ENCODE measurements at regions of chr9 and their contacts with region 1.

Region 1: DNA sequence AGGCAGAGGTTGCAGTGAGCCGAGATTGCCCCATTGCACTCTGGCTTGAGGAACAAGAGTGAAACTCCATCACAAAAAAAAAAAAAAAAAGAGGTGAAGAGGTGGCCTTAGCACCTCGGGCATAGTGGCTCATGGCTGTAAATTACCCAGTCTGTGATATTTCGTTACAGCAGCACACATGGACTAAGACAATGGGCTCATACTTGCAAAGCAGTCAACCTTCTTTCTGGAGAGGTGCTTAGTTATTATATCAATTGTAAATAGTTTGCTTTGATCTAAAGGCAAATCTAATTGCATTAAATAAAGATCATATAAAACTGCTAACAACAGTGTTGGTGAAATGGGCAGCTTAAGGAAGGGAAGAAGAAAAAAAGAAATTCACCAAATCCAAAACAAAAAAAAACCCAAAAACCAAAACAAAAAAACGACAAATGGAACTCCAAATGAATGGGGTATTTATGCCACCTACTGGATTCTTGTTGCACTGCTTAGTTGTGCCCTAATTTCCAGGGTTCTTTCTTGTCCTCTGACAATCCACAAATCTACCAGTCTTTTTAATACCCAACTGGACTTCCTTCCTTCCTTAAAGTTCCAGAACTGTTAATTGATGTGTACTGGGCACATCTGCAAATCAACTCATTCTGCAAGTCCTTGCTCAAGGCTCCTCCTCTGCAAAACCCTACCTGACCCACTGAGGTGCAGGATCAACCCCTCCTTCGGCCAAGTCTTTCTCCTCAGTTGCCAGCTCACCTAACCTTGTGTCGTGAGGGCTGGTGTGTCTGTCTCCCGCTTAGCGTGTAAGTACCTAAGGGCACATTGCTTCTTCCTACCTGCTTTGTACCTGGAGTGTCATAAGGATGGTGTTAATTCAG is 35.0 kb upstream of the DMRT1 start:
- DNase-seq: peak; percentile 50
- H3K4me3 ChIP-seq: no peak overlapping the region
- H3K27ac ChIP-seq: no peak overlapping the region
- H3K4me1 ChIP-seq: peaks cover 33% of the 10 kb centered on the region
- H3K27me3 ChIP-seq: no peaks in the 10 kb centered on the region
- CTCF ChIP-seq: peak; percentile 56 to 68
- POLR2A ChIP-seq: no peak

Region 2: GRCh38 chr9:469672-470551 is 336.6 kb before region 1 on chr9:
- CTCF ChIA-PET with region 1: no interaction called
- POLR2A ChIA-PET with region 1: no interaction called
- dilution Hi-C with region 1: no loop called
- intact Hi-C with region 1: loop called (anchors 1 kb)
- DNase-seq: peak; percentile 90
- H3K4me3 ChIP-seq: peak overlapping the region; percentile 46 to 82 (median 70)
- H3K27ac ChIP-seq: no peak overlapping the region
- H3K4me1 ChIP-seq: peaks cover 6% of the 10 kb centered on the region
- H3K27me3 ChIP-seq: no peaks in the 10 kb centered on the region
- CTCF ChIP-seq: no peak
- POLR2A ChIP-seq: peak; percentile 58

Region 3: GRCh38 chr9:684054-684890 is 122.2 kb before region 1 on chr9:
- CTCF ChIA-PET with region 1: no interaction called
- POLR2A ChIA-PET with region 1: no interaction called
- dilution Hi-C with region 1: no loop called
- intact Hi-C with region 1: loop called (anchors 2 kb)
- DNase-seq: peak; percentile 81
- H3K4me3 ChIP-seq: peak overlapping the region; percentile 19 to 70 (median 27)
- H3K27ac ChIP-seq: peak overlapping the region; percentile 99
- H3K4me1 ChIP-seq: peaks cover 58% of the 10 kb centered on the region
- H3K27me3 ChIP-seq: no peaks in the 10 kb centered on the region
- CTCF ChIP-seq: no peak
- POLR2A ChIP-seq: no peak

Region 4: GRCh38 chr9:751137-752051 is 55.1 kb before region 1 on chr9:
- CTCF ChIA-PET with region 1: interaction called, 11 read pairs
- POLR2A ChIA-PET with region 1: no interaction called
- dilution Hi-C with region 1: no loop called
- intact Hi-C with region 1: loop called (anchors 5 kb)
- DNase-seq: no peak
- H3K4me3 ChIP-seq: no peak overlapping the region
- H3K27ac ChIP-seq: peak overlapping the region; percentile 50
- H3K4me1 ChIP-seq: peaks cover 36% of the 10 kb centered on the region
- H3K27me3 ChIP-seq: no peaks in the 10 kb centered on the region
- CTCF ChIP-seq: no peak
- POLR2A ChIP-seq: no peak

Region 5: GRCh38 chr9:763692-764524 is 42.6 kb before region 1 on chr9:
- CTCF ChIA-PET with region 1: interaction called, 10 read pairs
- POLR2A ChIA-PET with region 1: no interaction called
- dilution Hi-C with region 1: no loop called
- intact Hi-C with region 1: loop called (anchors 1 kb)
- DNase-seq: peak; percentile 90
- H3K4me3 ChIP-seq: peak overlapping the region in 1 of 3 experiments; percentile 20
- H3K27ac ChIP-seq: no peak overlapping the region
- H3K4me1 ChIP-seq: peaks cover 2% of the 10 kb centered on the region
- H3K27me3 ChIP-seq: peaks cover 3% of the 10 kb centered on the region in 2 experiments
- CTCF ChIP-seq: peak; percentile 90 to 96
- POLR2A ChIP-seq: no peak